ENCODE measurements at regions of chr2 and their contacts with region 1.

Region 1: GRCh38 chr2:214069265-214069664 is 341.6 kb upstream of the VWC2L start:
- DNase-seq: peak; percentile 65 to 92
- H3K4me3 ChIP-seq: peak overlapping the region; percentile 15; the same call in 1 of the 2 replicates
- H3K27ac ChIP-seq: peak overlapping the region; percentile 13; the same call in 1 of the 2 replicates
- H3K4me1 ChIP-seq: peaks cover 11% of the 10 kb centered on the region
- H3K27me3 ChIP-seq: no peaks in the 10 kb centered on the region
- CTCF ChIP-seq: no peak

Region 2: GRCh38 chr2:213934560-213934959 is 134.7 kb before region 1 on chr2:
- CTCF ChIA-PET with region 1: no interaction called
- POLR2A ChIA-PET with region 1: no interaction called
- intact Hi-C with region 1: loop called (anchors 1 kb)
- DNase-seq: no peak
- H3K4me3 ChIP-seq: no peak overlapping the region
- H3K27ac ChIP-seq: no peak overlapping the region
- H3K4me1 ChIP-seq: 0 out of 2 replicates have a peak, but pooled peaks cover under 1% of the 10 kb centered on the region
- H3K27me3 ChIP-seq: no peaks in the 10 kb centered on the region
- CTCF ChIP-seq: peak; percentile 79

Region 3: DNA sequence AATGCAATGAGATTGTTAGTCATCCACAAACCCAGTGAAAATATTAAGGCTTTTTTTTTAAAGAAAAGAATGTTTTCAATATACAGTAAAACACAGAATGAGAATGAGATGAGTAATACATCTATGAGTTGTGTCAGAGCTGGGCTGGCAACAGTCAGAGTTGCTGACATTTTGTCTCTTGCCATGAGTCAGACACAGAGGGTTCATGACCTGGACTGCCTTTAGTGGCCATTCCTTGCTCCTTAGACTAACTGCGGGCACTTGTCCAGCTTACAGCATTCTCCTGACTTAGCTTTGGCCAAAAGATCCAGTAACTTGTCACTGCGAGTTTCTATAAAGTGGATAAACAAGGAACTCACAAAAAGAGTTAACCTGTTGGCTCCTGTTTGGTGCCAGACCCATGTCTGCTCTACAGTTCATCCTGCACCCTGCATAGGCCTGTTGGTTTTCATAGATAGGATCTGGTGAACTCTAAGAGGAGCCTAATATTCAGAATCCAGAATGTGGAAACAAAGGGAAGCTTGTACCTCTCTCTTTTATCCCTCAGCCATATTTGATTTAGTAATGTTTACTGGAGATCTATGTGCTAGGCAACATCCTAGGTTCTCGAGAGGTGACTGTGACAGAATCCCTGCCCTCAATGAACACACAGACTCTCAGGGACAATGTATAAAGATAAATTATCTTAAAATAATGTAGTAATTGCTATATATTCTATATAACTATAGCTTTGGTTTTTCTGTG is 49.9 kb before region 1 on chr2:
- CTCF ChIA-PET with region 1: no interaction called
- POLR2A ChIA-PET with region 1: interaction called, 12 read pairs
- intact Hi-C with region 1: loop called (anchors 1 kb)
- DNase-seq: peak; percentile 85 to 96
- H3K4me3 ChIP-seq: no peak overlapping the region
- H3K27ac ChIP-seq: peak overlapping the region; percentile 69
- H3K4me1 ChIP-seq: peaks cover 22% of the 10 kb centered on the region
- H3K27me3 ChIP-seq: no peaks in the 10 kb centered on the region
- CTCF ChIP-seq: no peak

Region 4: GRCh38 chr2:214103276-214104001 is 34.2 kb after region 1 on chr2:
- CTCF ChIA-PET with region 1: no interaction called
- POLR2A ChIA-PET with region 1: no interaction called
- intact Hi-C with region 1: loop called (anchors 2 kb)
- DNase-seq: peak; percentile 59
- H3K4me3 ChIP-seq: no peak overlapping the region
- H3K27ac ChIP-seq: peak overlapping the region; percentile 25; the same call in 1 of the 2 replicates
- H3K4me1 ChIP-seq: peaks cover 10% of the 10 kb centered on the region
- H3K27me3 ChIP-seq: no peaks in the 10 kb centered on the region
- CTCF ChIP-seq: no peak

Region 5: GRCh38 chr2:214378277-214379116 is 309.2 kb after region 1 on chr2:
- CTCF ChIA-PET with region 1: no interaction called
- POLR2A ChIA-PET with region 1: interaction called, 3 read pairs
- intact Hi-C with region 1: loop called (anchors 1 kb)
- DNase-seq: peak; percentile 50 to 84
- H3K4me3 ChIP-seq: no peak overlapping the region
- H3K27ac ChIP-seq: no peak overlapping the region
- H3K4me1 ChIP-seq: peaks cover 17% of the 10 kb centered on the region
- H3K27me3 ChIP-seq: no peaks in the 10 kb centered on the region
- CTCF ChIP-seq: no peak

Region 6: DNA sequence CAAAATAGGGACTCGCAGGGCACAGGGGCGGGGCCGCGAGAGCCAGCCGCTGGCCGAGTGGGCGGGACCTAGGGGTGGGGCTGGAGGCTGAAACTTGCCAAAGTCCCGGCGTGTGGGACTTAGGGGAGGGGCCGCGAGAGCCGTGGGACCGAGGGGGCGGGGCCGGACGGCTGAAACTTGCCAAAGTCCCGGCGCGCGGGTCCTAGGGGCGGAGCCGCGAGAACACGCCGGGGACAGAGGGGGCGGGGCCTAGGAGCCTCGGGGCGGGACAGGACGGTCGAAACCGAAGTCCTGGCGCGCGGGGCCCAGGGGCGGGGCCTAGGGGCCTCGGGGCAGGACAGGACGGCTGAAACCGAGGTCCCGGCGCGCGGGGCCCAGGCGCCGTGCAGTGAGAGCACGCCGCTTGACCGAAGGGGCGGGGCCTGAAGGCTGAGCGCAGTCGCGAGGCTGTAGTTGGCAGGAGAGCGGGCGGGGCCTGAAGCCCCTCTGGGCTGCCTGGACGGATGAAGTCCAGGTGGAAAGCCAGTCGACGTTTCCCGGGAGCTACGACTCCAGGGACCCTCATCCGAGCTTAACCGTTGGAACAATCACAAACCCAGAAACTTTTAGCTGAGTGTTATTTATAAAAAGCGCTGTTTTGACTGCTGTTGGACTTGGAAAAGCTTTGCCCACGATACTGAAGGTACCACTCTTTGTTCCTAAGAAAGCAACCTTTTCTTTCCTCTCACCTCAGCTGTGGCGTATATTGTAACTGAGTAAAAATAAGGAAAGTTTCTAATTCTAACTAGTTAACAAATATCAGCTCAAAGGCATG is 740.7 kb after region 1 on chr2:
- CTCF ChIA-PET with region 1: no interaction called
- POLR2A ChIA-PET with region 1: interaction called, 11 read pairs
- intact Hi-C with region 1: no loop called
- DNase-seq: peak; percentile 94 to 100
- H3K4me3 ChIP-seq: peak overlapping the region; percentile 75
- H3K27ac ChIP-seq: peak overlapping the region; percentile 83
- H3K4me1 ChIP-seq: peaks cover 35% of the 10 kb centered on the region
- H3K27me3 ChIP-seq: no peaks in the 10 kb centered on the region
- CTCF ChIP-seq: no peak

Measured in PC-9 (cell line).